ENCODE measurements at regions of chr18 and their contacts with region 1.

Region 1: GRCh38 chr18:35240664-35241447 is at the start of gene ZNF397:
- DNase-seq: peak; percentile 97
- H3K4me3 ChIP-seq: peak within 1 kb of the TSS; percentile 55 to 73 (median 56)
- H3K27ac ChIP-seq: peak within 1 kb of the TSS; percentile 98
- H3K4me1 ChIP-seq: peaks cover 12% of the 10 kb centered on the region
- H3K27me3 ChIP-seq: no peaks in the 10 kb centered on the region
- CTCF ChIP-seq: no peak
- POLR2A ChIP-seq: peak; percentile 70
- total RNA-seq, gene ZNF397: 5.1 and 5.5 TPM in 2 replicates

Region 2: DNA sequence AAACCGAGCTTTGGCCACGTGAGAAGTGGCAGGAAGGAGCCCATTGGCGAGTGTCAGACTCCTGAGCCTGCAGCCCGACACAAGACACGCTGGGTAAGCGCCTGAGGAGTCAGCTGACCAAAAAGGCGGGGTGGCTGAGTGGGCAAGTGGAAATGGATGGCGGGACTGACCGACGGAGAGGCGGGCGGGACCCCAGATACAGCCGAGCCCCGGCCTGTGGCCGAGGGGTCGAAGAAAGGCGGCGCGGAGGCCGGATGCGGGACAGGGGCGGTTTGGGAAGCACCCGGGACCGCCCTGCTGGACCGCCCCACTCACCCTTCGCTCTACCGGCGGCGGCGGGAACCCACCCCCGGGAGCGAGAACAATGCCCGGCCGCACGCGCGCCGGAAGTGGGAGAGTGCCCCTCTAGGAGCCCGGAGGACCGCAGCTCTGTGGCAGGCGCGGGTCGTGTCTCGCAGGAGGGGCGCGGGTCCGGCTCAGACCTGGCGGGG is 26.4 kb after region 1 on chr18:
- CTCF ChIA-PET with region 1: interaction called, 4 read pairs
- POLR2A ChIA-PET with region 1: no interaction called
- dilution Hi-C with region 1: no loop called
- intact Hi-C with region 1: loop called (anchors 1 kb)
- DNase-seq: peak; percentile 66
- H3K4me3 ChIP-seq: peak overlapping the region in 2 of 3 experiments; percentile 18 to 54
- H3K27ac ChIP-seq: peak overlapping the region; percentile 60
- H3K4me1 ChIP-seq: no peaks in the 10 kb centered on the region
- H3K27me3 ChIP-seq: no peaks in the 10 kb centered on the region
- CTCF ChIP-seq: no peak
- POLR2A ChIP-seq: no peak

Region 3: GRCh38 chr18:35282353-35282752 is 41.5 kb after region 1 on chr18:
- CTCF ChIA-PET with region 1: interaction called, 4 read pairs
- POLR2A ChIA-PET with region 1: no interaction called
- dilution Hi-C with region 1: no loop called
- intact Hi-C with region 1: loop called (anchors 1 kb)
- DNase-seq: peak; percentile 84
- H3K4me3 ChIP-seq: no peak overlapping the region
- H3K27ac ChIP-seq: peak overlapping the region; percentile 75
- H3K4me1 ChIP-seq: peaks cover 33% of the 10 kb centered on the region
- H3K27me3 ChIP-seq: no peaks in the 10 kb centered on the region
- CTCF ChIP-seq: no peak
- POLR2A ChIP-seq: no peak

Region 4: DNA sequence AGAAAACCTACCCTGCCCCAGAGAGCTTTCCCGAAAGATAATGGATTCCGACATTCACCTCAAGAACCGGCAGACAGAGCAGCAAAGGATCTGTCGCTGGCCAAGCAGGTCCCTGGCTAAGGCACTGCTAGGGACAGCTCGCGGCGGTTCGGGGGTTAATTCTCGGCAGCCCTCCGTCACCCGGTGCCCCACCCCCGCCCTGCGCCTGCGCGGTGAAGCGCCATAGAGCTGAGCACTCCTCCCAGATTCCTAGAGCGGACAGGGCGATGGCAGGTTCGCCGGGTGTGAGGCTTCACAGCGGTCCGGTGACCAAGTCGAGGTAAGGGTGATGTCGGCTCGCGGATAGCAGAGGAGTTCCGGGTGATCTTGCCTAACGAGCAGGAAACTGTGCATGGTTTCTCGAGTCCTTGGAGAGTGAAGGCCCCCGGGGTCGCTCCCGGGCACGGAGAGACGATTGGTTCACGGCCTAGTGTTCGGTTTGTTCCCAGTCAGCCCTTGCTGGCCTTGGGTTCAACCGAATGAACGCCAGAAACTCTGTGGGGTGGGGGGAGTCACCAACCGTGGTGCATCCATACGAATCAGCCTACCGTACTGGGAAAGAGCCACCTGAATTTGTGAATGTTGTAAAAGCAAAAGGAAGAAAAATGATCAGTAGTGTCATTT is 49.3 kb after region 1 on chr18 and contains the start of gene ZSCAN30:
- CTCF ChIA-PET with region 1: interaction called, 4 read pairs
- POLR2A ChIA-PET with region 1: interaction called, 9 read pairs
- dilution Hi-C with region 1: no loop called
- intact Hi-C with region 1: loop called (anchors 1 kb)
- DNase-seq: peak; percentile 98
- H3K4me3 ChIP-seq: peak within 1 kb of the TSS; percentile 49 to 100 (median 96)
- H3K27ac ChIP-seq: peak within 1 kb of the TSS; percentile 63
- H3K4me1 ChIP-seq: peaks cover 19% of the 10 kb centered on the region
- H3K27me3 ChIP-seq: no peaks in the 10 kb centered on the region
- CTCF ChIP-seq: no peak
- POLR2A ChIP-seq: peak; percentile 90
- total RNA-seq, gene ZSCAN30: 14.6 and 18.0 TPM in 2 replicates

Region 5: GRCh38 chr18:35343936-35344735 is 103.3 kb after region 1 on chr18 and contains the start of gene ZNF24:
- CTCF ChIA-PET with region 1: interaction called, 3 read pairs
- POLR2A ChIA-PET with region 1: interaction called, 3 read pairs
- dilution Hi-C with region 1: no loop called
- intact Hi-C with region 1: loop called (anchors 1 kb)
- DNase-seq: peak; percentile 92
- H3K4me3 ChIP-seq: peak within 1 kb of the TSS; percentile 69 to 97 (median 92)
- H3K27ac ChIP-seq: peak within 1 kb of the TSS; percentile 95
- H3K4me1 ChIP-seq: peaks cover 18% of the 10 kb centered on the region
- H3K27me3 ChIP-seq: no peaks in the 10 kb centered on the region
- CTCF ChIP-seq: no peak
- POLR2A ChIP-seq: peak; percentile 82
- total RNA-seq, gene ZNF24: 38.6 and 40.2 TPM in 2 replicates

Region 6: GRCh38 chr18:35355140-35355618 is 114.3 kb after region 1 on chr18:
- CTCF ChIA-PET with region 1: interaction called, 10 read pairs
- POLR2A ChIA-PET with region 1: interaction called, 4 read pairs
- dilution Hi-C with region 1: no loop called
- intact Hi-C with region 1: no loop called
- DNase-seq: peak; percentile 86
- H3K4me3 ChIP-seq: no peak overlapping the region
- H3K27ac ChIP-seq: no peak overlapping the region
- H3K4me1 ChIP-seq: no peaks in the 10 kb centered on the region
- H3K27me3 ChIP-seq: no peaks in the 10 kb centered on the region
- CTCF ChIP-seq: peak; percentile 81 to 82
- POLR2A ChIP-seq: no peak

Region 7: GRCh38 chr18:35972197-35973052 is 731.6 kb after region 1 on chr18 and contains the start of gene RMP24:
- CTCF ChIA-PET with region 1: no interaction called
- POLR2A ChIA-PET with region 1: no interaction called
- dilution Hi-C with region 1: no loop called
- intact Hi-C with region 1: loop called (anchors 5 kb)
- DNase-seq: peak; percentile 89
- H3K4me3 ChIP-seq: peak within 1 kb of the TSS; percentile 83 to 99 (median 91)
- H3K27ac ChIP-seq: peak within 1 kb of the TSS; percentile 91
- H3K4me1 ChIP-seq: peaks cover 18% of the 10 kb centered on the region
- H3K27me3 ChIP-seq: peaks cover 4% of the 10 kb centered on the region in 2 experiments
- CTCF ChIP-seq: no peak
- POLR2A ChIP-seq: peak; percentile 78